Endothelial cell of umbilical vein (primary cell): ENCODE measurements at regions of chr10 and their contacts with region 1.

Region 1: GRCh38 chr10:63166742-63167258 is 33.7 kb downstream of the NRBF2 start:
- DNase-seq: peak; percentile 84
- H3K4me3 ChIP-seq: no peak overlapping the region
- H3K27ac ChIP-seq: no peak overlapping the region
- H3K4me1 ChIP-seq: no peaks in the 10 kb centered on the region
- H3K27me3 ChIP-seq: no peaks in the 10 kb centered on the region
- CTCF ChIP-seq: peak; percentile 61 to 62
- POLR2A ChIP-seq: no peak

Region 2: DNA sequence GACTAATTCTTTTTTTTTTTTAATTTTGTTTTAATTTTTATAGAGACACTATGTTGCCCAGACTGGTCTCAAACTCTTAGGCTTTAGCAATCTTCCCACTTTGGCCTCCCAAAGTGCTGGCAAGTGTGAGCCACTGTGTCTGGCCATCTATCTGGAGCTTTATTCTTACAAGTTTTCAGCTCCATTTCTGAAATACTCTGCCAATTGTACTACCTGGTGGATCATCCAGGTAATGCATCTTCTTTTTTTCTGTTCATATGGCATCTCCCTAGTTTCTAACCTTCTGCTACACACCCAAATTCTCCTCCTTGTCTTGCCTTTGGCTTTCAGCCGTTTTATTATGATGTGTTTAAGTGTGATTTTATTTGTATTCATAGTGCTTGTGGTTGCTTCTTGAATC is 752.4 kb before region 1 on chr10:
- CTCF ChIA-PET with region 1: no interaction called
- POLR2A ChIA-PET with region 1: no interaction called
- dilution Hi-C with region 1: no loop called
- intact Hi-C with region 1: no loop called
- DNase-seq: no peak
- H3K4me3 ChIP-seq: no peak overlapping the region
- H3K27ac ChIP-seq: no peak overlapping the region
- H3K4me1 ChIP-seq: no peaks in the 10 kb centered on the region
- H3K27me3 ChIP-seq: no peaks in the 10 kb centered on the region
- CTCF ChIP-seq: peak in 1 of 2 donors; percentile 11
- POLR2A ChIP-seq: no peak

Region 3: DNA sequence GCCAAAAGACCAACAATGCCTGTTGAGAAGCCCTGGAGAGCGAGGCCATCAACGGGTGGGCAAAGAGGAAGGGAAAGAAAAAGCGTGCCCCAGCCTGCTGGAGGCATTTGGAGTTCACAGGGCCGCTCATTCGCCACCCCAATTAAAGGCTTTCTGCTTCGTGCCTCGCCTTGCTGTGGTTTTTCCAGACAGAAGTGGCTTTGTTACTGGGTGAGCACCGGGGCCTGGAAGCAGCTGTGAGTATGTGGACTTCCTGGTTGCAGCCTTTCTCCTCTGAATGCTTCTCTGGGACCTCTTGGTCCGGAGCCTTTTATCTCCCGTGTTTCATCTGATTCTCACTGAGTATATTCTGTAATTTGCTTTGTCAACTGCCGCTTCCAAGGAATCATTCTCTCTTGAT is 232.5 kb before region 1 on chr10:
- CTCF ChIA-PET with region 1: no interaction called
- POLR2A ChIA-PET with region 1: no interaction called
- dilution Hi-C with region 1: no loop called
- intact Hi-C with region 1: no loop called
- DNase-seq: no peak
- H3K4me3 ChIP-seq: no peak overlapping the region
- H3K27ac ChIP-seq: no peak overlapping the region
- H3K4me1 ChIP-seq: no peaks in the 10 kb centered on the region
- H3K27me3 ChIP-seq: no peaks in the 10 kb centered on the region
- CTCF ChIP-seq: no peak
- POLR2A ChIP-seq: no peak

Region 4: GRCh38 chr10:63337455-63338251 is 170.9 kb after region 1 on chr10:
- CTCF ChIA-PET with region 1: no interaction called
- POLR2A ChIA-PET with region 1: no interaction called
- dilution Hi-C with region 1: no loop called
- intact Hi-C with region 1: no loop called
- DNase-seq: no peak
- H3K4me3 ChIP-seq: no peak overlapping the region
- H3K27ac ChIP-seq: no peak overlapping the region
- H3K4me1 ChIP-seq: no peaks in the 10 kb centered on the region
- H3K27me3 ChIP-seq: no peaks in the 10 kb centered on the region
- CTCF ChIP-seq: no peak
- POLR2A ChIP-seq: no peak

Region 5: GRCh38 chr10:63537536-63537935 is 370.7 kb after region 1 on chr10:
- CTCF ChIA-PET with region 1: interaction called, 10 read pairs
- POLR2A ChIA-PET with region 1: no interaction called
- dilution Hi-C with region 1: no loop called
- intact Hi-C with region 1: no loop called
- DNase-seq: no peak
- H3K4me3 ChIP-seq: no peak overlapping the region
- H3K27ac ChIP-seq: no peak overlapping the region
- H3K4me1 ChIP-seq: no peaks in the 10 kb centered on the region
- H3K27me3 ChIP-seq: no peaks in the 10 kb centered on the region
- CTCF ChIP-seq: no peak
- POLR2A ChIP-seq: no peak

Region 6: DNA sequence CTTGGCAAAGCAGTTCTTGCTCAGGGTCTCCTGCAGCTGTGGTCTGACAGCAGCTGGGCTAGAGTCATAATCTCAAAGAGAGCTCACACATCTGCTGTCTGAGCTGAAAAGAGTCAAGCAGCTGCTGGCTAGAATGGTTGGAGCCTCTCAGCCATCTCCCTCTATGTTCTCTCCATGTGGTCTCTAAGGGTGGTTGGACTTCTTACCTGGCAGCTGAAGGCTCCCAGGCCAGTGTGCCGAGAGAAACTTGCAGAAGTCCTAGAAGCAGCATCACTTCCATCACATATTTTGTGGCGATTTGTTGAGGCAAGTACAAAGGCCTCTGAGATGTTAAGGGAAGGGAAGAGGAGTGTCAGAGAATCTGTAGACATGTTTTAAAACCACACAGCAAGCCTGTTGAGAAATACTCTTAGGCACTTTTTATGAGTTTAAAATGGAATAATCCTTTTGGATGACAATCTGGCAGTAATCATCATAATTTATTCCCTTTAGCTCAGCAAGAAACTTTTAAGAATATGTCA is 447.6 kb after region 1 on chr10:
- CTCF ChIA-PET with region 1: interaction called, 13 read pairs
- POLR2A ChIA-PET with region 1: no interaction called
- dilution Hi-C with region 1: no loop called
- intact Hi-C with region 1: no loop called
- DNase-seq: no peak
- H3K4me3 ChIP-seq: no peak overlapping the region
- H3K27ac ChIP-seq: no peak overlapping the region
- H3K4me1 ChIP-seq: peaks cover 6% of the 10 kb centered on the region
- H3K27me3 ChIP-seq: no peaks in the 10 kb centered on the region
- CTCF ChIP-seq: no peak
- POLR2A ChIP-seq: no peak

Region 7: GRCh38 chr10:63707254-63707910 is 540.6 kb after region 1 on chr10:
- CTCF ChIA-PET with region 1: interaction called, 25 read pairs
- POLR2A ChIA-PET with region 1: interaction called, 5 read pairs
- dilution Hi-C with region 1: no loop called
- intact Hi-C with region 1: loop called (anchors 2 kb)
- DNase-seq: peak; percentile 99
- H3K4me3 ChIP-seq: no peak overlapping the region
- H3K27ac ChIP-seq: peak overlapping the region; percentile 74
- H3K4me1 ChIP-seq: peaks cover 32% of the 10 kb centered on the region
- H3K27me3 ChIP-seq: no peaks in the 10 kb centered on the region
- CTCF ChIP-seq: no peak
- POLR2A ChIP-seq: no peak

Region 8: GRCh38 chr10:63819753-63820329 is 653.0 kb after region 1 on chr10:
- CTCF ChIA-PET with region 1: interaction called, 46 read pairs
- POLR2A ChIA-PET with region 1: no interaction called
- dilution Hi-C with region 1: no loop called
- intact Hi-C with region 1: loop called (anchors 1 kb)
- DNase-seq: peak; percentile 78
- H3K4me3 ChIP-seq: no peak overlapping the region
- H3K27ac ChIP-seq: no peak overlapping the region
- H3K4me1 ChIP-seq: no peaks in the 10 kb centered on the region
- H3K27me3 ChIP-seq: peaks cover 11% of the 10 kb centered on the region in 2 experiments
- CTCF ChIP-seq: peak; percentile 74
- POLR2A ChIP-seq: no peak